ENCODE measurements at regions of chr2 and their contacts with region 1.

Region 1: DNA sequence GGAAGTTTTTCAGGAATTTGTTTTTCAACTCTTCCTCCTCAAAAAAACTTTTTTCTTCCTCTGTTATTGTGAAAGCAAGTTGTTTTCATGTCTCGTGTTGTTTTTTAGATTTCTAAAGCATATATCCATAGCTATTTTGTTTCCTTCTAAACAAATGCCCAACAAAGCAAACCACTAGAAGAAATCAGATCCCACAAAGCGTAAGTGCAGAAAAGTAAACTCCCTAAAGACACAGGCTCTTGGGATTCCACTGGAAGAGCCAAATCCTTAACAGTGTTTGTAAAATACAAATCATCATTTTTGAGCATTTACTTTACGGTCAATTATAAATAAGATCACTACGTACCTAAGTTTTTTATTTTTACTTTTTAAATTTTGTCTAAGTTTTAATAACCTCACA is 21.7 kb upstream of the RIF1 start:
- DNase-seq: no peak
- H3K4me3 ChIP-seq: no peak overlapping the region
- H3K27ac ChIP-seq: no peak overlapping the region
- H3K4me1 ChIP-seq: no peaks in the 10 kb centered on the region
- CTCF ChIP-seq: no peak

Region 2: DNA sequence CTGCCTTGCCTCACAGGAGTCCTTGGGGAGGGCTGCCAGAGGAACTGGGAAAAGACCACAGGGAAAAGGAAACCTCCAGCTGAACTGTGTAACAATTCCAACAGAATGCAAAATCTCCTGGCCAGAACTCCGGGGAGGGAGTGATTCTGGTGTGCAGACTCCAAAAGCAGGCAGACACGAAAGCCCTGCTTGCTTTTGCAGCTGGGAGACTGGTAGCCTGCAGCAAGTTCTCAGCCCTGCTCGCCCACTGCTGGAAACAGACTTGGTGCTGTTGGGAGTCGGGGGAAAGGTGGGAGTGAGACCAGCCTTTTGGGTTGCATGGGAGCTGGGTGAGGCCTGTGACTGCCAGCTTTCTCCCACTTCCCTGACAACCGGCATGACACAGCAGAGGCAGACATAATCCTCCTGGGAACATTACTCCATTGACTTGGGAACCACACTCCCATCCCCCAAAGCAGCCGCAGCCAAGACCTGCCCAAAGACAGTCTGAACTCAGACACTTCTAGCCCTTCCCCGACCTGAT is 72.6 kb before region 1 on chr2:
- CTCF ChIA-PET with region 1: no interaction called
- POLR2A ChIA-PET with region 1: no interaction called
- intact Hi-C with region 1: loop called (anchors 5 kb)
- DNase-seq: no peak
- H3K4me3 ChIP-seq: no peak overlapping the region
- H3K27ac ChIP-seq: no peak overlapping the region
- H3K4me1 ChIP-seq: no peaks in the 10 kb centered on the region
- CTCF ChIP-seq: no peak

Region 3: GRCh38 chr2:151374426-151374825 is 13.6 kb before region 1 on chr2:
- CTCF ChIA-PET with region 1: no interaction called
- POLR2A ChIA-PET with region 1: no interaction called
- intact Hi-C with region 1: no loop called
- DNase-seq: no peak
- H3K4me3 ChIP-seq: no peak overlapping the region
- H3K27ac ChIP-seq: no peak overlapping the region
- H3K4me1 ChIP-seq: no peaks in the 10 kb centered on the region
- CTCF ChIP-seq: no peak

Region 4: GRCh38 chr2:151403914-151404313 is 15.9 kb after region 1 on chr2:
- CTCF ChIA-PET with region 1: no interaction called
- POLR2A ChIA-PET with region 1: no interaction called
- intact Hi-C with region 1: no loop called
- DNase-seq: no peak
- H3K4me3 ChIP-seq: no peak overlapping the region
- H3K27ac ChIP-seq: no peak overlapping the region
- H3K4me1 ChIP-seq: no peaks in the 10 kb centered on the region
- CTCF ChIP-seq: no peak

Region 5: GRCh38 chr2:151508519-151508918 is 120.5 kb after region 1 on chr2:
- CTCF ChIA-PET with region 1: no interaction called
- POLR2A ChIA-PET with region 1: no interaction called
- intact Hi-C with region 1: no loop called
- DNase-seq: no peak
- H3K4me3 ChIP-seq: no peak overlapping the region
- H3K27ac ChIP-seq: no peak overlapping the region
- H3K4me1 ChIP-seq: no peaks in the 10 kb centered on the region
- CTCF ChIP-seq: no peak